Caco-2 (cell line): ENCODE measurements at regions of chr4 and their contacts with region 1.

Region 1: GRCh38 chr4:110005461-110006056 is 92.9 kb downstream of the EGF start:
- DNase-seq: peak in 1 of 2 experiments; percentile 41
- H3K4me3 ChIP-seq: no peak overlapping the region
- H3K4me3 Mint-ChIP-seq: no peak overlapping the region
- H3K27ac Mint-ChIP-seq: no peak overlapping the region
- H3K4me1 ChIP-seq: no peaks in the 10 kb centered on the region; the same call in 1 of the 2 replicates
- H3K4me1 Mint-ChIP-seq: peaks cover 7% of the 10 kb centered on the region
- H3K27me3 ChIP-seq: no peaks in the 10 kb centered on the region
- H3K27me3 Mint-ChIP-seq: no peaks in the 10 kb centered on the region
- CTCF ChIP-seq: peak; percentile 50 to 61

Region 2: DNA sequence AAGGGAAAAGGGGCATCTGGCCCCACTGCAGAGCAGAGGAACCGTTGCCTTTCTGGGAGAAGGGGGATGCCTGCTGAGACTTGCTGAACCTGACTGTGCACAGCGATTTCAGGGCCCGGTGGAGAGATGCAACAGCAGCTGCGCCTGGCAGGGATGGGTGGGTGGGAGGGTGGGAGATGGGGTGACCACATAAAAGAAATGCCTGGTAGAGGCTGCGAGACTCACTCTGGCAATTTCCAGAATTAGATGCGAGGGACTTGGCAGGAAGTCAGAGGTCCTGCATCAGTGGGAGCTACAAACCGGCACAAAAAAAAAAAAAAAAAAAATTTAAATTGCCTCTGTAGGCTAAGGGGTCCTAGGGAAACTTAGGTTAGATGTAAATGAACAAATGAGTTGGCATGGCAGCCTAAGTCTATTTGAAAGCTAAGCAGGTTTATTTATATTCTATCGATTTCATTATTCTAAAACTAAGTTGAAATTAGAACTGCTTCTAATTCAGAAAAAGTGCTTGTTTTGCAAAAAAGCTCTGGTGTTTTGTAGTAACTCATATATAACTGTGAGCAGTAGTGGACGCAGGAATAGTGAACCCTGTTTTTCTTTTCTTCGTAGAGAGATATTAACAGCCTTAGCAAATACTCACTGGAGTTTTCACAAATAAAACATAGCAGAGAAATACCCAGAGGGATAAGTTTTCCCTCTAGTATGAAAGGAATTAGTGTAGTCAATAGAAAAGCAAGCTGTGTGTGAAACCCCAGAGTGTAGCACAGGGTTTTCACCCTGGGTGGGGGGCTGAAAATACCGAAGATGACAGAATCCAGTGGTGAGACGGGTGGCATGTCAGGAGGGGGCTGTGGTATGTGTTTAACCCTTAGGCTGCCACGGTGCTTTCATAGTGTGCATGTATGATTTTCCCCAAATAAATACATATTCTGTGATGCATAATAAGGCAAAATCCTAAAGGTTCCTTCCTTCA is 37.3 kb after region 1 on chr4:
- CTCF ChIA-PET with region 1: no interaction called
- POLR2A ChIA-PET with region 1: no interaction called
- intact Hi-C with region 1: loop called (anchors 5 kb)
- DNase-seq: no peak
- H3K4me3 ChIP-seq: no peak overlapping the region
- H3K4me3 Mint-ChIP-seq: no peak overlapping the region
- H3K27ac Mint-ChIP-seq: peak overlapping the region; percentile 72
- H3K4me1 ChIP-seq: peaks cover 15% of the 10 kb centered on the region
- H3K4me1 Mint-ChIP-seq: peaks cover 15% of the 10 kb centered on the region
- H3K27me3 ChIP-seq: no peaks in the 10 kb centered on the region
- H3K27me3 Mint-ChIP-seq: no peaks in the 10 kb centered on the region
- CTCF ChIP-seq: no peak